Panc1 (cell line): ENCODE measurements at regions of chr15 and their contacts with region 1.

Region 1: DNA sequence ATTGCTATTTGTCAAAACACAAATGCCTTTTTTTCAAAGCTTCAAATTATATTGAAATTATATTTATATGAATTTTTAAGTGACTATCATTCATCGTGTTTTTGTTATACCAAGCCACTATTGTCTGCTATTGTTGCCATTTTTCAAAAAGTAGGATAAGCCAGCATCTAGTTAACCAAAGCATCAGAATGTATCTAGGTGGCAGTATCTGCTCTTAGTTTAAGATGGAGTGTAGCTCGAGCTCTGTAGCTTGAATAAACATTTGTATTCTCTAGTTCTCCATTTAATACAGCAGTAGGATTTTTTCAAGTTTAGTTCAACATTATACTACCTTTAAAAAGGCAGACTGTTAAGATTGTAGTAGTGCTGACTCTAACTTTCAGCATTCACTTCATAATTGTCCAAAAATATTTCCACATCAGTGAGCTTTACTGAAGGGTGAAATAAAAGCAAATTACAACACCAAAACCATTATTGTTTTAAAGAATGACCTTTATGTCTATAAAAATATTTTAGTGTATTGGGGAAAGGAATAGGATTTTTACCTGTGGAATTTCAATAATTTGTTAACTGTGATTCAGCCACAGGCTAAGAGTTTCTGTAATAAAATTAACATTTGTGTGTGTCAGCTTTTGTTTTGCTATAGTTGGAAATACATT is 19.6 kb upstream of the C15orf61 start:
- DNase-seq: no peak
- ATAC-seq: peak; percentile 66; the same call in 1 of the 2 replicates
- H3K4me3 ChIP-seq: no peak overlapping the region
- H3K27ac ChIP-seq: no peak overlapping the region
- H3K4me1 ChIP-seq: no peaks in the 10 kb centered on the region
- H3K27me3 ChIP-seq: no peaks in the 10 kb centered on the region
- CTCF ChIP-seq: peak; percentile 54; the same call in 1 of the 2 replicates

Region 2: DNA sequence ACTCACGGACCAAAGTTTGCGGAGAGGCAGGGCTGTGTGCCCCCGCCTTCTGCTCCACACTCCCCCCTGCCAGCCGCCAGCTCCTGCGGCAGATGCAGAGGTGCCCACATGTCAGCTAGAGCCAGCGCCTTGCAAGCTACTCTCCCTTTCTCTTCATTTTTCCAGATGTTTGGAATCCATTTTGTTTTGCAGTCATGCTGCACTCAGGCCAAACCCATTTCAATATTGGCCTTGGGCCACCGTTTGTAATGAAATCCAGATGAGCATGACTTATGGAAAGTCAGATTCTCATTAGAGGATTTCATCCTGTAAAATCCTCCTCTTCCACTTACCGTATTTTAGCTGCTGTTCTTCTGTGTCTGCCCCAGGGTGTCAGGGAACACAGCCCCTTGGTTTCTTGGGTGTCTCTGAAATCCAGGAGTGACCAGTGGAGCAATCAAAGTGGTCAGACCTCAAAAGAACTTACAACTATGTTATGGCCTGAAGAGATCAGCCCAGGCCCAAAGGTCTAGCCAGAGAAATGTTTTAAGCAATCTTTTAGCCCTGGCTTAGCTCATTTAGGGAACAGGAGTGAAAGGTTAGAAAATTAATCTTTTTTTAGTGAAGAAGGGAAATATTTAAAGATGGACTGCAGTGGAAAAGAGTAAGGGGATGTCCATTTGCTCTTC is 312.6 kb before region 1 on chr15:
- CTCF ChIA-PET with region 1: no interaction called
- POLR2A ChIA-PET with region 1: no interaction called
- in situ Hi-C with region 1: no loop called
- intact Hi-C with region 1: no loop called
- DNase-seq: no peak
- ATAC-seq: no peak
- H3K4me3 ChIP-seq: no peak overlapping the region
- H3K27ac ChIP-seq: peak overlapping the region; percentile 84
- H3K4me1 ChIP-seq: peaks cover 97% of the 10 kb centered on the region
- H3K27me3 ChIP-seq: no peaks in the 10 kb centered on the region
- CTCF ChIP-seq: no peak

Region 3: DNA sequence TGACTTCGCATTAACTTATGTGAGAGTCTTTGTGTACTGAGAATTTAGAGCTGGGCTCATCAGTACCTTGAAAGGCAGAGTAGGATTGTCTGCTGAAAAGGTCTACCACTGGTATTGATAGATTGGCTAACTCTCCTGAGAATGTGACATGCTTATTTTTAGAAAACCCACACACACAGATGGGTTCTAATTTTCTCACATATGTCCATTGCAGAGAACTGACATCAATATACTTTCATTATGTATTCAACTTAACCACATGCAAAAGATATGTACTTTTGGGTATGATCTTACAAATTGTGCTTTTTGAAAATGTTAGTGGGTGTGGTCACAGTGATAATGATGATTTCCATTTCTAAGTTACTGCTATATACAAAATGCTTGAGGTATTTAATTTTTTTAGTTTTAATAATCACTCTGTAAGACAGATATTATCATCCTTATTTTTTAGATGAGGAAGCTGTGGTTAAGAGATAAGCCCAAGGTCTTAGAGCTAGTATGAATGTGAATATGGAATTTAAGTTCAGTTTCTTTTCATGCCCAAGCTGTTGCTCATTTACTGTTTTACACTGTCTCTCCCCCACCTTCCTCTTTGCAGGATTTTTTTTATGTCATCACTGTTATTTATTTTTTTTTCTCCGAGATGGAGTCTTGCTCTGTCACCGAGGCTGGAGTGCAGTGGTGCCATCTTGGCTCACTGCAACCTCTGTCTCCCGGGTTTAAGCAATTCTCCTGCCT is 63.5 kb after region 1 on chr15:
- CTCF ChIA-PET with region 1: interaction called, 11 read pairs
- POLR2A ChIA-PET with region 1: no interaction called
- in situ Hi-C with region 1: no loop called
- intact Hi-C with region 1: no loop called
- DNase-seq: no peak
- ATAC-seq: no peak
- H3K4me3 ChIP-seq: no peak overlapping the region
- H3K27ac ChIP-seq: no peak overlapping the region
- H3K4me1 ChIP-seq: no peaks in the 10 kb centered on the region
- H3K27me3 ChIP-seq: no peaks in the 10 kb centered on the region
- CTCF ChIP-seq: no peak

Region 4: DNA sequence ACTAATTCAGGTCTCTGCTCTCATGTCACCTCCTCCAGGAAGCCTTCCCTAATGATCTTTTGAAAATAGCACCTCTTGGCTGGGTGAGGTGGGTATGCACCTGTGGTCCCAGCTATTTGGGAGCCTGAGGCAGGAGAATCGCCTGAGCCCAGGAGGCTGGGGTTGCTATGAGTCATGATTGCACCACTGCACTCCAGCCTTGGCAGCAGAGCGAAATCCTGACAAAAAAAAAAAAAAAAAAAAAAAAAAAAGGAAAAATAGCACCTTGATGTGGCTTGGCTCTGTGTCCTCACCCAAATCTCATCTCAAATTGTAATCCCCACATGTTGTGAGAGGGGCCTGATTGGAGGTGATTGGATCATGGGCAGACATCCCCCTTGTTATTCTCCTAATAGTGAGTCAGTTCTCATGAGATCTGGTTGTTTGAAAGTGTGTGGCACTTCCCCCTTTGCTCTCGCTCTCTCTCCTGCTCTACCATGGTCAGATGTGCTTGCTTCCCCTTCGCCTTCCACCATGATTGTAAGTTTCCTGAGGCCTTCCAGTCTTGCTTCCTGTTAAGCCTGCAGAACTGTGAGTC is 349.8 kb after region 1 on chr15:
- CTCF ChIA-PET with region 1: interaction called, 12 read pairs
- POLR2A ChIA-PET with region 1: no interaction called
- in situ Hi-C with region 1: no loop called
- intact Hi-C with region 1: no loop called
- DNase-seq: no peak
- ATAC-seq: peak; percentile 37; the same call in 1 of the 2 replicates
- H3K4me3 ChIP-seq: no peak overlapping the region
- H3K27ac ChIP-seq: peak overlapping the region; percentile 45; the same call in 1 of the 2 replicates
- H3K4me1 ChIP-seq: peaks cover 18% of the 10 kb centered on the region
- H3K27me3 ChIP-seq: no peaks in the 10 kb centered on the region
- CTCF ChIP-seq: no peak

Region 5: GRCh38 chr15:68197661-68198437 is 696.5 kb after region 1 on chr15:
- CTCF ChIA-PET with region 1: no interaction called
- POLR2A ChIA-PET with region 1: interaction called, 22 read pairs
- in situ Hi-C with region 1: no loop called
- intact Hi-C with region 1: no loop called
- DNase-seq: no peak
- ATAC-seq: no peak
- H3K4me3 ChIP-seq: no peak overlapping the region
- H3K27ac ChIP-seq: no peak overlapping the region
- H3K4me1 ChIP-seq: peaks cover 5% of the 10 kb centered on the region; the same call in 1 of the 2 replicates
- H3K27me3 ChIP-seq: no peaks in the 10 kb centered on the region
- CTCF ChIP-seq: no peak